ENCODE measurements at regions of chr2 and their contacts with region 1.

Region 1: GRCh38 chr2:17309741-17310339 is 208.4 kb downstream of the RAD51AP2 start:
- DNase-seq: peak; percentile 60
- ATAC-seq: no peak; the same call in 1 of the 2 replicates
- H3K4me3 ChIP-seq: no peak overlapping the region
- H3K27ac ChIP-seq: no peak overlapping the region
- H3K4me1 ChIP-seq: no peaks in the 10 kb centered on the region
- H3K27me3 ChIP-seq: peaks cover 6% of the 10 kb centered on the region; the same call in 1 of the 2 replicates
- CTCF ChIP-seq: peak; percentile 74

Region 2: DNA sequence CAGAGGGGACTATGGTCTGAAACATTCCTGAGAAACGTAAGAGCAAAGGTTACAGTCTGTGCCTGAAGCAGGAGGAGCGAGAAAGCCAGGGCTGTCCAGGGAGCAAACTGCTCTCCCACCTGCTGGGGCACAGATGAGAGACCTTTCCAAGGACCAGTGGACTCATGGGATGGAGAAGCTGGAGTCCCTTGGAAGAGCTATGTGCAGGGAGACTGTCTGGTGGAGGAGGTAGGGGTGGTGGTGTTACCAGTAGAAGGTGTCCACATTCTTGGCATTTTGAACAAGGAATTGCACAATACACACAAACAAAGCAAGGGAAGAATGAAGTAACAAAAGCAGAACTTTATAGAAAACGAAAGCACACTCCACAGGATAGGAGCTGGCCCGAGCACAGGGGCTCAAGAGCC is 546.3 kb before region 1 on chr2:
- CTCF ChIA-PET with region 1: no interaction called
- POLR2A ChIA-PET with region 1: no interaction called
- intact Hi-C with region 1: loop called (anchors 10 kb)
- DNase-seq: no peak
- ATAC-seq: no peak
- H3K4me3 ChIP-seq: no peak overlapping the region
- H3K27ac ChIP-seq: no peak overlapping the region
- H3K4me1 ChIP-seq: no peaks in the 10 kb centered on the region
- H3K27me3 ChIP-seq: peaks cover 4% of the 10 kb centered on the region; the same call in 1 of the 2 replicates
- CTCF ChIP-seq: no peak

Region 3: DNA sequence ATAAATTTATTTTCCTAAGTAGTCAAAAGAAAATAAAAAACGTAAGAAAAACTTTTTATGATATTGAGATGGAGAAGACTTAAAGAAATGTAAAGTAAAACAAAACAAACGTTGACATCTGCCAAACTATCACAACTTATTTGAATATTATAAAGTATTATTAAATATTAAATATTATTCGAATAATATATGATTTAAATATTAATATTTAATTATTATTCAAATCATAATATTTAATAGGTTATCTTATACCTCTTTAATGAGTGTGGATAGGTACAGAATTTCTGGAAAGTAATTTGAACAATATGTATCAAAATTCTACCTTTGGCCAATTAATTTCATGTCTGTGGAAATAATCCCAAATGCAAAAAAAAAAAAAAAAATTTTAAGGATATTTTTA is 70.3 kb before region 1 on chr2:
- CTCF ChIA-PET with region 1: no interaction called
- POLR2A ChIA-PET with region 1: no interaction called
- intact Hi-C with region 1: loop called (anchors 2 kb)
- DNase-seq: no peak
- ATAC-seq: no peak
- H3K4me3 ChIP-seq: no peak overlapping the region
- H3K27ac ChIP-seq: no peak overlapping the region
- H3K4me1 ChIP-seq: no peaks in the 10 kb centered on the region
- H3K27me3 ChIP-seq: no peaks in the 10 kb centered on the region
- CTCF ChIP-seq: no peak

Region 4: DNA sequence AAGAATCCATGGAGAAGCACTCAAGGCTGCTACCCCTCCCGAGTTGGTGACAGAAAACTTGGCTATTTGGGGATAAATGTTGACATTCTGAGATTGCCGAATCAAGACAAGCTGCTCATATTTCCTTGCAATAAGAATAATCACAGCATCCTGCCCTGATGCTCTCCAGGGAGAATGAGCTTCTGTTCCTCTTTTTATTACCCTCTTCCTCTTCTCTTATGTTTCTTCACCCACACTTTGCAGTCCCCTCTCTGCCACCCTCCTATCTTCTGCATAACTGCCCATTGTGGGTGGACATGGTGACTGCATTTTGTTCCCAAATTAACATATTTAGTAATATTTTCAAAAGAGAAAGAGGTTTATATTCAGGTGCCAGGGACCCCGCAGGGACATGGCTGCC is 494.5 kb after region 1 on chr2:
- CTCF ChIA-PET with region 1: no interaction called
- POLR2A ChIA-PET with region 1: no interaction called
- intact Hi-C with region 1: no loop called
- DNase-seq: no peak
- ATAC-seq: no peak
- H3K4me3 ChIP-seq: no peak overlapping the region
- H3K27ac ChIP-seq: no peak overlapping the region
- H3K4me1 ChIP-seq: no peaks in the 10 kb centered on the region
- H3K27me3 ChIP-seq: peaks cover 46% of the 10 kb centered on the region
- CTCF ChIP-seq: no peak